ENCODE measurements at regions of chr4 and their contacts with region 1.

Region 1: DNA sequence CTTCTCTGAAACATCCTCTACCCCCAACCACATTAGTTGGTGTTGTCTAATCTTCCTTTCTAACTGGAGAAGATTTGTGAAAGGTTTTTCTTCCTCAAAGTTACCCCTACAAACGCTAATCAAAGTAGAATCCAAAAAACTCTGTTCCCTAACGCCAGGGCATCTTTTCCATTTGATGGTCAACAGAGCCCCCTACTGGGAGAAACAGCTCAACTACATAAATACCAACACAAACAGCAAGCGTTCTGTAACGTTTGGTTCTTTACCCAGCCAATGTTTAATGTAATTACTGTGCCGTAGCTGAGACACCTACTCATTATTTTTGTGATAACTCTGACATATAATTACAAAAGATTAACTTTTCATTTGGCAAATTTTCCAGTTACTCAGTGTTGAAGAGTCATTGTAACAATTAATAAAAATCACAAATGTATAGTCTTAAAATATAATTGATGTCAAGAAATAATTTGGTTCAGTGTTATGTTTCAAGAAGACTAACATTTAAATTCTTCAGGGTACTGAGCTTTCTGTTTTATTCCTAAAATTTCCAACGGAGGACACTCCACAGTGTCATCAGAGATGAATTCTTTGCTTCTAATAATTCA is 94.9 kb upstream of the TBC1D9 start:
- DNase-seq: peak; percentile 33
- ATAC-seq: peak; percentile 95
- H3K4me3 ChIP-seq: no peak overlapping the region
- H3K27ac ChIP-seq: no peak overlapping the region
- H3K4me1 ChIP-seq: no peaks in the 10 kb centered on the region
- H3K27me3 ChIP-seq: no peaks in the 10 kb centered on the region
- CTCF ChIP-seq: peak; percentile 65 to 83 (median 68)
- EP300 ChIP-seq: no peak
- POLR2A ChIP-seq: no peak
- RAD21 ChIP-seq: peak; percentile 99

Region 2: DNA sequence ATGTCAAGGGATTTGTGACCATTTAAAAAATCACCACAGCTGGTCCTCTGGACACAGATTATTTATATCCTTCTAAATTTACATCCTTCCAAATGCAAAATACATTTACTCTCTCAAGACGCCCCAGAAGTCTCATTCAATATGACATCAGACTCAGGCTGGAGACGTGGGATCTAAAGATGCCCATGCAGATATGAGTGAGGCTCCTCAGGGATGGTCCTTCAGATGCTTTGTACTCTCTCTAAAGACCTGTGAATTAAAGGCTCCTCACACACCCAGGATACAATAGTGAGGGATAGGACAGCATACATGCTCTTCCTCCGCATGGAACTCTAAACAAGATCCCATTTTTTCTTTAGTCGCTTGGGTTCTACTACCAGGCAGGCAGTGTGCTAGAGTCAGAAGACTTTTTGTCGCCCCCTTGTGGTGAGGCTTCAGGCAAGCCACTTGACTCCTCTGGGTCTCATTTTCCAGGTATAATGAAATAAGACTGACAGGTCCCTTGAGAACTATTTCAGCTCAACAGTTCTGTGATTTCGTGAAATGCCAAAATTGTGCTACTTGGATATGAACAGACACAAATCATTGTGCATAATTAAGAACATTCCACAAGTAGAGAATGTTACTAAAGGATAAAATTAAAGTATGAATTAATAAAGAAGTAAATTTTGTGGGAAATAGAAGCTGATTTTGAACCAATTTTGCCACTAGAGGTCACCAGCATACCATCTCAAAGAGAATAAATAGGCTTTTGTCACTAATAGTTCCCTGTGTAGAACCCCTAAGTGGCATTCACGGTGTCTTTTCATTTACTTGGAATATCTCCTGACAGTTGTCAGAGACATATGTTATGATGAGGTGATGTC is 491.3 kb before region 1 on chr4:
- CTCF ChIA-PET with region 1: interaction called, 31 read pairs
- POLR2A ChIA-PET with region 1: no interaction called
- RAD21 ChIA-PET with region 1: interaction called, 11 read pairs
- SMC1A ChIA-PET with region 1: interaction called, 8 read pairs
- in situ Hi-C with region 1: loop called (anchors 5 kb)
- intact Hi-C with region 1: loop called (anchors 1 kb)
- DNase-seq: no peak
- ATAC-seq: peak; percentile 100
- H3K4me3 ChIP-seq: no peak overlapping the region
- H3K27ac ChIP-seq: no peak overlapping the region
- H3K4me1 ChIP-seq: no peaks in the 10 kb centered on the region
- H3K27me3 ChIP-seq: no peaks in the 10 kb centered on the region
- CTCF ChIP-seq: peak; percentile 68 to 77 (median 74)
- EP300 ChIP-seq: no peak
- POLR2A ChIP-seq: no peak
- RAD21 ChIP-seq: peak; percentile 62

Region 3: GRCh38 chr4:140523857-140524742 is 327.0 kb before region 1 on chr4 and contains the start of gene ELMOD2:
- CTCF ChIA-PET with region 1: interaction called, 5 read pairs
- POLR2A ChIA-PET with region 1: no interaction called
- RAD21 ChIA-PET with region 1: interaction called, 3 read pairs
- SMC1A ChIA-PET with region 1: no interaction called
- in situ Hi-C with region 1: no loop called
- intact Hi-C with region 1: loop called (anchors 1 kb)
- DNase-seq: peak; percentile 74
- ATAC-seq: peak; percentile 100
- H3K4me3 ChIP-seq: peak within 1 kb of the TSS; percentile 87
- H3K27ac ChIP-seq: peak within 1 kb of the TSS; percentile 75
- H3K4me1 ChIP-seq: no peaks in the 10 kb centered on the region
- H3K27me3 ChIP-seq: no peaks in the 10 kb centered on the region
- CTCF ChIP-seq: peak; percentile 92 to 96 (median 96)
- EP300 ChIP-seq: no peak
- POLR2A ChIP-seq: peak; percentile 94
- RAD21 ChIP-seq: peak; percentile 38
- polyA plus RNA-seq, gene ELMOD2: 6.5 to 7.9 TPM

Region 4: GRCh38 chr4:140626661-140627376 is 224.3 kb before region 1 on chr4:
- CTCF ChIA-PET with region 1: interaction called, 3 read pairs
- POLR2A ChIA-PET with region 1: no interaction called
- RAD21 ChIA-PET with region 1: no interaction called
- SMC1A ChIA-PET with region 1: interaction called, 4 read pairs
- in situ Hi-C with region 1: no loop called
- intact Hi-C with region 1: loop called (anchors 5 kb)
- DNase-seq: no peak
- ATAC-seq: no peak; the same call in 2 of the 3 replicates
- H3K4me3 ChIP-seq: no peak overlapping the region
- H3K27ac ChIP-seq: no peak overlapping the region
- H3K4me1 ChIP-seq: no peaks in the 10 kb centered on the region
- H3K27me3 ChIP-seq: no peaks in the 10 kb centered on the region
- CTCF ChIP-seq: peak in 2 of 3 experiments; percentile 3 to 40; a peak in 3 of 6 replicates
- EP300 ChIP-seq: no peak
- POLR2A ChIP-seq: no peak
- RAD21 ChIP-seq: peak; percentile 30; the same call in 1 of the 2 replicates

Region 5: GRCh38 chr4:140790765-140791164 is 60.4 kb before region 1 on chr4:
- CTCF ChIA-PET with region 1: interaction called, 3 read pairs
- POLR2A ChIA-PET with region 1: no interaction called
- RAD21 ChIA-PET with region 1: no interaction called
- SMC1A ChIA-PET with region 1: no interaction called
- in situ Hi-C with region 1: no loop called
- intact Hi-C with region 1: loop called (anchors 2 kb)
- DNase-seq: peak; percentile 86
- ATAC-seq: peak; percentile 94
- H3K4me3 ChIP-seq: no peak overlapping the region
- H3K27ac ChIP-seq: peak overlapping the region; percentile 62
- H3K4me1 ChIP-seq: peaks cover 29% of the 10 kb centered on the region
- H3K27me3 ChIP-seq: no peaks in the 10 kb centered on the region
- CTCF ChIP-seq: no peak
- EP300 ChIP-seq: peak; percentile 30 to 85; a peak in 2 of 4 replicates
- POLR2A ChIP-seq: no peak
- RAD21 ChIP-seq: no peak

Measured in GM12878 (cell line).